ENCODE measurements at regions of chr2 and their contacts with region 1.

Region 1: GRCh38 chr2:3581367-3582262 is 6.6 kb downstream of the RPS7 start:
- DNase-seq: no peak
- ATAC-seq: no peak
- H3K4me3 ChIP-seq: no peak overlapping the region
- H3K4me3 Mint-ChIP-seq: no peak overlapping the region
- H3K27ac ChIP-seq: no peak overlapping the region
- H3K27ac Mint-ChIP-seq: no peak overlapping the region
- H3K4me1 ChIP-seq: peaks cover 14% of the 10 kb centered on the region
- H3K4me1 Mint-ChIP-seq: peaks cover 31% of the 10 kb centered on the region
- H3K27me3 ChIP-seq: no peaks in the 10 kb centered on the region
- H3K27me3 Mint-ChIP-seq: no peaks in the 10 kb centered on the region
- CTCF ChIP-seq: no peak

Region 2: GRCh38 chr2:3505771-3506170 is 75.8 kb before region 1 on chr2:
- CTCF ChIA-PET with region 1: no interaction called
- POLR2A ChIA-PET with region 1: no interaction called
- intact Hi-C with region 1: loop called in 1 of 2 experiments (anchors 5 kb)
- DNase-seq: no peak
- ATAC-seq: no peak
- H3K4me3 ChIP-seq: no peak overlapping the region
- H3K4me3 Mint-ChIP-seq: no peak overlapping the region
- H3K27ac ChIP-seq: no peak overlapping the region
- H3K27ac Mint-ChIP-seq: no peak overlapping the region
- H3K4me1 ChIP-seq: no peaks in the 10 kb centered on the region
- H3K4me1 Mint-ChIP-seq: no peaks in the 10 kb centered on the region
- H3K27me3 ChIP-seq: no peaks in the 10 kb centered on the region
- H3K27me3 Mint-ChIP-seq: no peaks in the 10 kb centered on the region
- CTCF ChIP-seq: no peak

Region 3: GRCh38 chr2:3604991-3605961 is 23.7 kb after region 1 on chr2:
- CTCF ChIA-PET with region 1: no interaction called
- POLR2A ChIA-PET with region 1: no interaction called
- intact Hi-C with region 1: no loop called
- DNase-seq: peak in 4 of 9 experiments; percentile 9 to 55 (median 50)
- ATAC-seq: no peak
- H3K4me3 ChIP-seq: no peak overlapping the region
- H3K4me3 Mint-ChIP-seq: peak overlapping the region; percentile 53
- H3K27ac ChIP-seq: no peak overlapping the region
- H3K27ac Mint-ChIP-seq: peak overlapping the region; percentile 45
- H3K4me1 ChIP-seq: peaks cover 3% of the 10 kb centered on the region
- H3K4me1 Mint-ChIP-seq: peaks cover 6% of the 10 kb centered on the region
- H3K27me3 ChIP-seq: no peaks in the 10 kb centered on the region
- H3K27me3 Mint-ChIP-seq: no peaks in the 10 kb centered on the region
- CTCF ChIP-seq: no peak

Measured in CD8-positive, alpha-beta T cell (primary cell).